ENCODE measurements at regions of chr1 and their contacts with region 1.

Region 1: GRCh38 chr1:160437432-160438316 is 37.3 kb downstream of the VANGL2 start:
- DNase-seq: no peak

Region 2: GRCh38 chr1:160400223-160400645 is 37.4 kb before region 1 on chr1 and contains the start of gene VANGL2:
- intact Hi-C with region 1: no loop called
- DNase-seq: no peak
- total RNA-seq, gene VANGL2: 2.0 to 2.4 TPM

Region 3: GRCh38 chr1:160423966-160424365 is 13.7 kb before region 1 on chr1:
- intact Hi-C with region 1: loop called in 1 of 2 experiments (anchors 1 kb)
- DNase-seq: no peak

Measured in posterior vena cava (tissue), 2 donors.